Naive thymus-derived CD4-positive, alpha-beta T cell (primary cell): ENCODE measurements at regions of chr14 and their contacts with region 1.

Region 1: GRCh38 chr14:38065106-38065762 is 142.5 kb upstream of the SSTR1 start:
- DNase-seq: peak; percentile 8 to 90 (median 84)
- ATAC-seq: peak; percentile 98
- H3K4me3 ChIP-seq: peak overlapping the region; percentile 43
- H3K4me3 Mint-ChIP-seq: peak overlapping the region; percentile 62 to 84 (median 74)
- H3K27ac ChIP-seq: peak overlapping the region; percentile 89
- H3K27ac Mint-ChIP-seq: peak overlapping the region; percentile 88 to 98 (median 96)
- H3K4me1 ChIP-seq: peaks cover 12 to 17% of the 10 kb centered on the region in 2 donors
- H3K4me1 Mint-ChIP-seq: peaks cover 14 to 62% (median 44%) of the 10 kb centered on the region in 7 donors
- H3K27me3 ChIP-seq: no peaks in the 10 kb centered on the region
- H3K27me3 Mint-ChIP-seq: peaks cover 0 to 4% (median 0%) of the 10 kb centered on the region in 5 donors

Region 2: DNA sequence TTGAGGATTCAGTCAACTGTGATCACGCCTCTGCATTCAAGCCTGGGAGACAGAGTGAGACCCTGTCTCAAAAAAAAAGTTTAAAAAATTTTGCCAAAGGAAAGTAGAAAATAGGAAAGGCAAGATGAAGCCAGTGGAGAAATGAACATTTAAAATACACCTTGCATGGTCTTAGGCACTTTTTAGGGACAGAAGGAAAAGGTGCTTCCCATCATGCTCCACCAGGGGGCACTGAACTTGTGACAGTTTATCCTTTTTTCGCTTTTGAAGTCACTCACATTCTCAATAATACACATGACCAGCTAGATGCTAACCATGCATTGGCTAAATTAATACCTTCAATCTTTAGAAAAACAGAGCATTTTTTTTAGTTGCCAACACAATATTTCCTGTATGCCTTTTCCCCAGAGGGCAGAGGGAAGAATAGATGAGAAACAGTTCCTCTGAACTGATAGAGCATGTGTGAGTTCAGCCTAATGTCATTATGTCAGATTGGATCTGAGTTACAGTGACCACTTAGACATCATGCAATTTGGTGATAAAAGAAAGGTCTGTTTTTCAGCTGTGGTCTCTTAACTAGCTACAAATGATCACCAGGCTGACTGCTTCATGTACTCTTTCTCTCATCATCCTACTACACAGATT is 79.3 kb before region 1 on chr14:
- CTCF ChIA-PET with region 1: interaction called, 4 read pairs
- POLR2A ChIA-PET with region 1: no interaction called
- intact Hi-C with region 1: loop called in 1 of 2 experiments (anchors 1 kb)
- DNase-seq: peak; percentile 5 to 61 (median 54)
- ATAC-seq: peak; percentile 53
- H3K4me3 ChIP-seq: no peak overlapping the region
- H3K4me3 Mint-ChIP-seq: no peak overlapping the region
- H3K27ac ChIP-seq: no peak overlapping the region
- H3K27ac Mint-ChIP-seq: no peak overlapping the region
- H3K4me1 ChIP-seq: peaks cover 4 to 5% of the 10 kb centered on the region in 2 donors
- H3K4me1 Mint-ChIP-seq: peaks cover 0 to 20% (median 6%) of the 10 kb centered on the region in 7 donors
- H3K27me3 ChIP-seq: no peaks in the 10 kb centered on the region
- H3K27me3 Mint-ChIP-seq: no peaks in the 10 kb centered on the region

Region 3: DNA sequence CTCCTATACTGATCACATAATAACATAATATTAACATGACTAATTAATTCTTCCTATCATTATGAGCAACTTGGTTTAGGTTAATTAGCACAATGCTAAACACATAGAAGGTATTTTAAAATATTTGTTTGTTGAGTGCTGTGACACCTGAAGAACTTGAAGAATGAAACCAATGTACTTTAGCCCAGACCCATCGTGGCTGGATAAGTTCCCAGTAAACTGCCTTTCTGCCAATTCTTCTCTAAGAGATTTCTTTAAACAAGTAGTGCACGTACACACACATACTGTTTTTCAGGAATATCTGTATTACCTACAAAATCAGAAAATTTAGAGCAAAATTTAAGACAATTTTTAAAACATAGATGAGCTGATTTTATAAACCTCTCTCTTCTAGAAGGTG is 64.9 kb before region 1 on chr14:
- CTCF ChIA-PET with region 1: no interaction called
- POLR2A ChIA-PET with region 1: no interaction called
- intact Hi-C with region 1: no loop called
- DNase-seq: no peak
- ATAC-seq: no peak
- H3K4me3 ChIP-seq: no peak overlapping the region
- H3K4me3 Mint-ChIP-seq: no peak overlapping the region
- H3K27ac ChIP-seq: no peak overlapping the region
- H3K27ac Mint-ChIP-seq: no peak overlapping the region
- H3K4me1 ChIP-seq: no peaks in the 10 kb centered on the region
- H3K4me1 Mint-ChIP-seq: peaks cover 0 to 19% (median 4%) of the 10 kb centered on the region in 7 donors
- H3K27me3 ChIP-seq: no peaks in the 10 kb centered on the region
- H3K27me3 Mint-ChIP-seq: no peaks in the 10 kb centered on the region

Region 4: GRCh38 chr14:38016497-38016896 is 48.7 kb before region 1 on chr14:
- CTCF ChIA-PET with region 1: no interaction called
- POLR2A ChIA-PET with region 1: no interaction called
- intact Hi-C with region 1: no loop called
- DNase-seq: no peak
- ATAC-seq: no peak
- H3K4me3 ChIP-seq: no peak overlapping the region
- H3K4me3 Mint-ChIP-seq: no peak overlapping the region
- H3K27ac ChIP-seq: no peak overlapping the region
- H3K27ac Mint-ChIP-seq: no peak overlapping the region
- H3K4me1 ChIP-seq: no peaks in the 10 kb centered on the region
- H3K4me1 Mint-ChIP-seq: peaks cover 0 to 4% (median 0%) of the 10 kb centered on the region in 7 donors
- H3K27me3 ChIP-seq: no peaks in the 10 kb centered on the region
- H3K27me3 Mint-ChIP-seq: no peaks in the 10 kb centered on the region

Region 5: DNA sequence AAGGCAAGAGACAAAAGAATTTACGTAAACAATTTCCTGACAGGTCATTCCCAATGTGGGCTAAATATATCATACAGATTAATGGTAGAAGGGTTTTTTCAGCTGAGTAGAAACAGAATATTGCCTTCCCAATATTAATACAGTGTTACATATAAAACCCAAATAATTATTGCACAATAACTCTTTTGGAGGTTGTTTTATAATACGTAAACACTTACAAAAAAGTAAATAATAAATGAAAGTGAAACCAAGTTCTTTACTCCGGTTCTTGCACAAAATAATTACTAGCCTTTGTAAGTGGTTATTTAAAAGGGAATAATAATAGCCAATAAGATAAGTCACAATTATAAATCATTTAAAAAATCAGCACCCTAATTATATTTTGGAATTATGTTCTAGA is 23.9 kb after region 1 on chr14:
- CTCF ChIA-PET with region 1: interaction called, 3 read pairs
- POLR2A ChIA-PET with region 1: interaction called, 6 read pairs
- intact Hi-C with region 1: loop called in 1 of 2 experiments (anchors 2 kb)
- DNase-seq: no peak
- ATAC-seq: no peak
- H3K4me3 ChIP-seq: peak overlapping the region; percentile 59
- H3K4me3 Mint-ChIP-seq: peak overlapping the region in 9 of 10 donors; percentile 62 to 91 (median 82)
- H3K27ac ChIP-seq: peak overlapping the region; percentile 64
- H3K27ac Mint-ChIP-seq: peak overlapping the region in 8 of 9 donors; percentile 77 to 97 (median 88)
- H3K4me1 ChIP-seq: peaks cover 4 to 27% of the 10 kb centered on the region in 2 donors
- H3K4me1 Mint-ChIP-seq: peaks cover 0 to 56% (median 22%) of the 10 kb centered on the region in 7 donors
- H3K27me3 ChIP-seq: no peaks in the 10 kb centered on the region
- H3K27me3 Mint-ChIP-seq: no peaks in the 10 kb centered on the region

Region 6: GRCh38 chr14:38143659-38144505 is 78.6 kb after region 1 on chr14:
- CTCF ChIA-PET with region 1: no interaction called
- POLR2A ChIA-PET with region 1: no interaction called
- intact Hi-C with region 1: loop called in 1 of 2 experiments (anchors 5 kb)
- DNase-seq: no peak
- ATAC-seq: no peak
- H3K4me3 ChIP-seq: no peak overlapping the region
- H3K4me3 Mint-ChIP-seq: no peak overlapping the region
- H3K27ac ChIP-seq: no peak overlapping the region
- H3K27ac Mint-ChIP-seq: no peak overlapping the region
- H3K4me1 ChIP-seq: no peaks in the 10 kb centered on the region
- H3K4me1 Mint-ChIP-seq: peaks cover 0 to 15% (median 4%) of the 10 kb centered on the region in 7 donors
- H3K27me3 ChIP-seq: no peaks in the 10 kb centered on the region
- H3K27me3 Mint-ChIP-seq: peaks cover 0 to 2% (median 0%) of the 10 kb centered on the region in 5 donors

Region 7: DNA sequence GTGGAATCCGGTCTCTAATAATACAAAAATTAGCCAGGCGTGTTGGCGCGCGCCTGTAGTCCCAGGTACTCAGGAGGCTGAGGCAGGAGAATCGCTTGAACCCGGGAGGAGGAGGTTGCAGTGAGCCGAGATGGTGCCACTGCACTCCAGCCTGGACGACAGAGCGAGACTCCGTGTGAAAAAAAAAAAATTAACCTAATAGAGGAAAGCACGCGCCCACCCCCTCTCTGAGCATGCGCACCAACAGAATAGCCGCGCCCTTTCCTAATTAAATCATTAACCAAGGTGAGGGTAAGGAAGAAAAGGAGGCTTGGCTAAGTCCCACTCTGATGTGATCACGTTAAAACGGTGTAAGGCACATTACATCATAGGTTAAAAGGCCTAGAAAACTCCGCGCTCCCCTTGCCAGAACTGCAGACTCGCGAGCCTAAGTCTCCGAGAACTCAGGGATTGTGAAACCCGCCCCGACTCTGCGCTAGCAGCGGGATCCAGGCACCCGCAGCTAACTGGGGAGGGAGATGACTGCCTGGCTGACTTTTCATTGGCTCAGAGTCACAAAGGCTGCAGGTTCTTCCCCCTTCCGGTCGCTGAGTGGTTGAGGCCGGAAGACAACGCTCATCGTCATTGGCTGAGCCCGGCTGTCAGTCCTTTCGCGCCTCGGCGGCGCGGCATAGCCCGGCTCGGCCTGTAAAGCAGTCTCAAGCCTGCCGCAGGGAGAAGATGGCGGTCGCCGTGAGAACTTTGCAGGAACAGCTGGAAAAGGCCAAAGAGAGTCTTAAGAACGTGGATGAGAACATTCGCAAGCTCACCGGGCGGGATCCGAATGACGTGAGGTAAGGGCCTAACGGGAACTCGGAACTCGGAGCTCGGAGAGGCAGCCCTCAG is 1109.6 kb after region 1 on chr14 and contains the start of gene PNN:
- CTCF ChIA-PET with region 1: no interaction called
- POLR2A ChIA-PET with region 1: no interaction called
- intact Hi-C with region 1: loop called in 1 of 2 experiments (anchors 2 kb)
- DNase-seq: peak; percentile 83 to 99 (median 98)
- ATAC-seq: peak; percentile 94
- H3K4me3 ChIP-seq: peak within 1 kb of the TSS; percentile 80
- H3K4me3 Mint-ChIP-seq: peak within 1 kb of the TSS; percentile 95 to 100 (median 99)
- H3K27ac ChIP-seq: peak within 1 kb of the TSS; percentile 90
- H3K27ac Mint-ChIP-seq: peak within 1 kb of the TSS; percentile 96 to 100 (median 99)
- H3K4me1 ChIP-seq: peaks cover 16 to 28% of the 10 kb centered on the region in 2 donors
- H3K4me1 Mint-ChIP-seq: peaks cover 27 to 74% (median 50%) of the 10 kb centered on the region in 7 donors
- H3K27me3 ChIP-seq: no peaks in the 10 kb centered on the region
- H3K27me3 Mint-ChIP-seq: no peaks in the 10 kb centered on the region
- total RNA-seq, gene PNN: 80.1 to 120 (median 102) TPM